Calu3 (cell line): ENCODE measurements at regions of chr12 and their contacts with region 1.

Region 1: DNA sequence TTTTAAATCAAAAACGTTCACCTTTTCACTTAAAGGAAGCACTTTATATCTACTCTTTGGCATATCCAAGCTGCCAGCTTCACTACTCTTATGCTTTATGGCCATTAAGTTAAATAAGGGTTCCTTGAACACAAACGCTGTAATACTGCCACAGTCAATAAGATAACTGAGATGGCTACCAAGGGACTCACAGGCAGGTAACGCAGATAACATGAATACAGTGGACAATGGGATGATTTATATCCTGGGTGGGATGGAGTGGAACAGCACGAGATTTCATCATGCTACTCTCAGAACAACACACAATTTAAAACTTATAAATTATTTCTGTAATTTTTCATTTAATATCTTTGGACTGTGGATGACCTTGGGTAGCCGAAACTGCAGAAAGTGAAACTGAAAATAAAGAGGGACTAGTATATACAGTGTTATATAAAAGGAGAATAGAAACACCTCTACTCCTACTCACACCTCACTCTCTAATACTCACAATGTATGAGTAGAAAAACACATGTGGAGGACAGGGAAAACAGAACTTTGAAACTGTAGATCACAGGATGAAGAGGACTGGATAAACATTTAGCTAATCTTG is 367.3 kb downstream of the C12orf50 start:
- DNase-seq: no peak
- H3K4me3 Mint-ChIP-seq: peak overlapping the region; percentile 61
- H3K27ac Mint-ChIP-seq: peak overlapping the region; percentile 84
- H3K4me1 Mint-ChIP-seq: peaks cover 21% of the 10 kb centered on the region
- H3K27me3 Mint-ChIP-seq: no peaks in the 10 kb centered on the region
- CTCF ChIP-seq: no peak

Region 2: GRCh38 chr12:87439990-87440827 is 221.7 kb before region 1 on chr12:
- CTCF ChIA-PET with region 1: no interaction called
- intact Hi-C with region 1: loop called (anchors 5 kb)
- DNase-seq: peak; percentile 79
- H3K4me3 Mint-ChIP-seq: peak overlapping the region; percentile 3
- H3K27ac Mint-ChIP-seq: peak overlapping the region; percentile 90
- H3K4me1 Mint-ChIP-seq: peaks cover 60% of the 10 kb centered on the region
- H3K27me3 Mint-ChIP-seq: no peaks in the 10 kb centered on the region
- CTCF ChIP-seq: no peak

Region 3: DNA sequence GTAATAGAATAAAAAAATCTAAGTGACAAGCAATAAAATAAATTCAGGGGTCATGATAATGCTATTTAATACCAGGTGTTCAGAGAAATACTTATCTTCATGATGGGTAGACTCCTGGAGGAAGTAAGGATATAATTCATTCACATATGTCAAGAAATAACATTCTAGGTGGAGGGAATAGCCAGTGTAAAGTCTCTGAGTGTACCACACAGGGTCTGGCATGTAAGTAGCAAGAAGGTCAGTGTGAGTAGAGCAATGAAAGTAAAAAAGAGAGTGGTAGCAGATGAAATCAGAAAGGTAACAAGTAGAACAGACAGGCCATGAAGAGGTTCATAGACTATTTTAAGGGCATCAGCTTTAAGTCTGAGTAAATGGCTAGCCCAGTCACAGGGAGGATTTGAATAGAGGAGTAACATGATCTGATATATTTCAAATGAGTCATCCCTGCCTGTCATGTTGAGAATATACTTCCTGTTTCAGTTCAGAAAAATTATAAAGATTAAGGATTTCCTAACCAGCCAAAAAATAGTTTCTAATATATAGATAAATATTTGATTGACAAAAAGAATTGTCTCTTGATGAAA is 152.6 kb before region 1 on chr12:
- CTCF ChIA-PET with region 1: no interaction called
- intact Hi-C with region 1: loop called (anchors 5 kb)
- DNase-seq: peak; percentile 11
- H3K4me3 Mint-ChIP-seq: no peak overlapping the region
- H3K27ac Mint-ChIP-seq: peak overlapping the region; percentile 10
- H3K4me1 Mint-ChIP-seq: peaks cover 9% of the 10 kb centered on the region
- H3K27me3 Mint-ChIP-seq: no peaks in the 10 kb centered on the region
- CTCF ChIP-seq: no peak